ENCODE measurements at regions of chr3 and their contacts with region 1.

Region 1: GRCh38 chr3:45659661-45660559 is 29.3 kb upstream of the SACM1L start:
- DNase-seq: peak; percentile 63

Region 2: DNA sequence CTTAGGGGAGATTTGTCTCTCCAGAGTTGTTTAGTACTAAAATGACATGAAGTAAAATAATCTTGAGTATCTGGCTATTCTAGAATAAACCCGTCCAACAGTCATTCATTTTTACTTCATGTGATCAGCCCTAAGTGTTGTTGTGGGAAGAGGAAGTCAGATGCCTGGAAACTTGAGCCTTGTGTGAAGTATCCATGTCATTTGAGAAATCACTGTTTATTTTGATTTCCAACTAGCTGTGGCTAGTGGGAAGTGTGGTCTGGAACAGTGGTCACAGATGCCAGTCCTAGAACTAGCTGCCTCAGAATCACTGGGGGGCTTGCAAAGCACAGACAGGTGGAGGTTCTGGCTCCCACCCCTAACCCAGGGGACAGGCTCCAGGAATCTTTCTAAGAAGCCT is 143.1 kb before region 1 on chr3:
- in situ Hi-C with region 1: loop called (anchors 10 kb)
- DNase-seq: no peak